Activated CD4-positive, alpha-beta memory T cell treated with anti-CD3 and anti-CD28 coated beads for 36 hours (primary cell): ENCODE measurements at regions of chr19 and their contacts with region 1.

Region 1: DNA sequence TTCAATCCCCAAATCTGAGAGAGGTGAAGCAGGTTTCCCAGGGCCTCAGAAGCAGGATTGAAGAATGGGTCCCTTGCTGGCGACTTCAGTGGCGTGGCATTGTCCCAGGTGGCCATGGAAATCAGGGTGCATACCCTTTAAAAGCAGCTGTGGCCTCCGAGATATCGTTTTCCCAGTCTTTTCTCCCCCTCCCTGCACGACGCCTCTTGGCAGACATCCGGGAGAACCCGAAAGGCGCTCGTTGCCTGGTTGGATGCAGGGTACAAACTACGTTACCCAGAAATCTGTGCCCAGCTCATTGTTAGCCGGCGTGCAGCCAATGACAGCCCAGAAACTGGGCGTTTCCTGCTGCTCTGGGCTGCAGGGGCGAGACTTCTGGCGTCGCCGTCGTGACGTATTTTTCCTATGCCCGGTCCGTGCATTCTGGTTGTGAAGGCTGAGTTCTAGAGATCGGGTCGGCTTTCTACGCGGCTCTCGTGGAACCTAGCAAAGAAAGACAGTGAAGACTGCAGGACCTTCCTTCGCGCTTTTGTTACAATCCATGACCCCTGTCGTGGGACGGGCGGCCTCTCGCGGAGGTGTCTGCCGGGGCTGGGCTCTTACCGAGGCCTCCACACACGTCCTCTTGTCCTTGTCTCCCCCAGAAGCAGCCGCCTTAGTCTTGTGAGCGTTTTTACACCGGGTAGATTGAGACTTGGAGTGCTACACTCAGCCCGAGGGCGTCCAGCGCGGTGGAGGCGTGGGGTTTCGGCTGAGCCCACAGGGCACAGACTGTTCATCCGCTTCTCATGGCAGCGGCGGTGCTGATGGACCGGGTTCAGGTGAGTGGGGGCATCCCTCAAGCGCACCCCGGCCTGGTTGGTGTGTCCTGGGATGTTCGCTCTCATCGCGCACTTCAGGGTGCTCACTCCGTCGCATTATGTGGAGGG is at the start of gene ZNF304:
- DNase-seq: peak; percentile 91
- H3K4me3 Mint-ChIP-seq: peak within 1 kb of the TSS; percentile 90
- H3K27ac Mint-ChIP-seq: peak within 1 kb of the TSS; percentile 68
- H3K4me1 Mint-ChIP-seq: peaks cover 25% of the 10 kb centered on the region
- H3K27me3 Mint-ChIP-seq: peaks cover 5% of the 10 kb centered on the region
- total RNA-seq, gene ZNF304: 3.8 to 4.0 TPM

Region 2: GRCh38 chr19:57240311-57241090 is 110.6 kb before region 1 on chr19 and contains the start of gene ZNF805:
- CTCF ChIA-PET with region 1: no interaction called
- POLR2A ChIA-PET with region 1: no interaction called
- intact Hi-C with region 1: loop called (anchors 1 kb)
- DNase-seq: peak; percentile 97
- H3K4me3 Mint-ChIP-seq: peak within 1 kb of the TSS; percentile 90
- H3K27ac Mint-ChIP-seq: peak within 1 kb of the TSS; percentile 89
- H3K4me1 Mint-ChIP-seq: peaks cover 24% of the 10 kb centered on the region
- H3K27me3 Mint-ChIP-seq: no peaks in the 10 kb centered on the region
- total RNA-seq, gene ZNF805: 6.9 to 7.0 TPM

Region 3: GRCh38 chr19:57302020-57302465 is 49.1 kb before region 1 on chr19:
- CTCF ChIA-PET with region 1: no interaction called
- POLR2A ChIA-PET with region 1: no interaction called
- intact Hi-C with region 1: no loop called
- DNase-seq: no peak
- H3K4me3 Mint-ChIP-seq: no peak overlapping the region
- H3K27ac Mint-ChIP-seq: no peak overlapping the region
- H3K4me1 Mint-ChIP-seq: peaks cover 10% of the 10 kb centered on the region
- H3K27me3 Mint-ChIP-seq: no peaks in the 10 kb centered on the region

Region 4: DNA sequence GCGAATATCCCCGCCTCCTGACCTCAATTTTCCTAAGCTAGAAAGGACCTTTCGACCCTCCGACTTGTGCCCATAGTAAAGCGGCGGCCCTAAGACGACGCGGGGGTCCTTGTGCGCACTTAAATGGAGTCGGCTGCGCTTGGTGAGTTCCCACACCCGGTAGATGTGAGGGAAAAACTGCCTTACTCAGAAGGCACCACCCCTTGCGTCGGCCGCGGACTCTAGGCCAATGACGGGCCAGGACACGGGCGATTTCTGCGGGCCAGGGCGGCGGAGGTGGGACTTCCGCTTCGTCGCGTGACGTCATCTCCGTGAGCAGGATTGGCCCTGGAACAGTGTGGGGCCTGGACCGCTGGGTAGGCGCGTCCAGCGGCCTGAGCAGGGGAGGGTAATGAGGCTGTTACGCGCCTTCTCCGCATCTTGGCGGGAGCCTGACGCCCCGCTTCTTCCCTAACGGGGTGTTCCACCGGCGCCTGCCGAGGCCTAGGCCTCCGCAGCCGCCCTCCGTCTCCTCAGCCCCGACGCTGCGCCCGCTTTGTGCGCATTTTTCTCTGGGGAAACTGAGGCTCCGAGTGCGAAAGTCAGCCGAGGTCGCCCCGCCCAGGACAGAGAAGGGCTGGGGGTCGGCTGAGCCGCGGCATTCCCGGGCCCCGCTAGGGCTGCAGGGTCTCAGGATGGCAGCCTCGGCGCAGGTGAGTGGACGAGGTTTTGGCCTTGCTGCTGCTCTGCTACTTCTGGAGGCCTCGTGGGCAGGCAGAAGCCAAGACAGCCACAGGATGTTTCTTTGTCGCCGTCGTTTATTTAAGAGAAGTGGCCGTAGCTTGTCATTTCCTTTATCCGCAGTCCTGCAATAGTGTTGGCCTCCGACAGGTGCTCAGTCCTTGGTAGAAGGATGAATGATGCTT is 30.7 kb before region 1 on chr19 and contains the start of gene ZNF543:
- CTCF ChIA-PET with region 1: no interaction called
- POLR2A ChIA-PET with region 1: no interaction called
- intact Hi-C with region 1: loop called (anchors 1 kb)
- DNase-seq: peak; percentile 96
- H3K4me3 Mint-ChIP-seq: peak within 1 kb of the TSS; percentile 85
- H3K27ac Mint-ChIP-seq: peak within 1 kb of the TSS; percentile 83
- H3K4me1 Mint-ChIP-seq: peaks cover 24% of the 10 kb centered on the region
- H3K27me3 Mint-ChIP-seq: peaks cover 18% of the 10 kb centered on the region
- total RNA-seq, gene ZNF543: 4.0 to 4.3 TPM

Region 5: GRCh38 chr19:57362997-57363705 is 12.0 kb after region 1 on chr19 and contains the starts of genes TRAPPC2B and ZNF547:
- CTCF ChIA-PET with region 1: no interaction called
- POLR2A ChIA-PET with region 1: interaction called, 7 read pairs
- intact Hi-C with region 1: loop called (anchors 1 kb)
- DNase-seq: peak; percentile 99
- H3K4me3 Mint-ChIP-seq: peak within 1 kb of the TSS; percentile 85
- H3K27ac Mint-ChIP-seq: peak within 1 kb of the TSS; percentile 92
- H3K4me1 Mint-ChIP-seq: peaks cover 14% of the 10 kb centered on the region
- H3K27me3 Mint-ChIP-seq: no peaks in the 10 kb centered on the region
- total RNA-seq, gene TRAPPC2B: 3.3 to 3.9 TPM
- total RNA-seq, gene ZNF547: 1.0 to 1.4 TPM

Region 6: GRCh38 chr19:57374179-57374578 is 23.0 kb after region 1 on chr19:
- CTCF ChIA-PET with region 1: no interaction called
- POLR2A ChIA-PET with region 1: no interaction called
- intact Hi-C with region 1: no loop called
- DNase-seq: no peak
- H3K4me3 Mint-ChIP-seq: no peak overlapping the region
- H3K27ac Mint-ChIP-seq: no peak overlapping the region
- H3K4me1 Mint-ChIP-seq: no peaks in the 10 kb centered on the region
- H3K27me3 Mint-ChIP-seq: no peaks in the 10 kb centered on the region